ENCODE measurements at regions of chr6 and their contacts with region 1.

Region 1: DNA sequence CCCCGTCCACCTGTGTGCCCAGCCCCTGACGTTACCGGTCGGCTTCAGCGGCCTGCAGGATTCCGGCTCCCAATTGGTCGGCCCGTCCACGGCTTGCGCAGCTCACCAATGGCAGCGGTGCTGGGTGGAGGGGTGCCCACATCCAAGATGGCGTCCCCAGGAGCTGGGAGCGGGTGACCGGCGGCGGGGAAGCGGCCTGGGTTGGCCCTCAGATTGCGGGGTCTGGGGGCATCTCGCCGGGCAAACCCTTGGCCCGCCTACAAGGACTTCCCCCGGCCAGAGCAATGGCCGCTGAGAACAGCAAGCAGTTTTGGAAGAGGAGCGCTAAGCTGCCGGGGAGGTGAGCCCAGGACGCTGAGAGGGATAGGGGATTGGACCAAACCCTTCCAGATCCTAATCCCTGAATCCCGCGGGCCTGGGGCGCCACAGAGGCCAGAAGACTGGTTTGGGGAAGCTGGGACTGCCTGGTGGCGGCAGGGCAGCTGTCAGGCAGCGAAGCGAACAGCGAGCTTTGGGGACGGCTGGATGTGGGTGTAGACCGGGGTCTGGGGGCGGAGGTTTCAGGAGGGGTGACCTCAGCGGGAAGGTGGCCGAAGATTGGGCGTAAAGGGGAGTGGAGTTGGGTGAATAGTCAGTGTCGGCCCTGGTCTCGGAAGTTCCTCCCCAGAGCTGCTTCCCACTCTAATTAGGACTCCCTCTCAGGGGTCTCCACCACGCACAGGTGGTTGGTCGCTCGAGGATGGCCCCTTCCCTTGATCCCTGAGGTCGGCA is at the starts of genes TBC1D22B and TMEM217:
- DNase-seq: peak; percentile 99
- H3K4me3 Mint-ChIP-seq: peak within 1 kb of the TSS; percentile 88
- H3K27ac Mint-ChIP-seq: peak within 1 kb of the TSS; percentile 95
- H3K4me1 Mint-ChIP-seq: peaks cover 42% of the 10 kb centered on the region
- H3K27me3 Mint-ChIP-seq: no peaks in the 10 kb centered on the region
- total RNA-seq, gene TBC1D22B: 17.2 and 18.7 TPM in 2 replicates
- total RNA-seq, gene TMEM217: 4.1 and 6.1 TPM in 2 replicates

Region 2: GRCh38 chr6:36442671-36443470 is 814.9 kb before region 1 on chr6 and contains the starts of genes KCTD20 and PXT1:
- intact Hi-C with region 1: loop called (anchors 5 kb)
- DNase-seq: peak; percentile 96
- H3K4me3 Mint-ChIP-seq: peak within 1 kb of the TSS; percentile 96
- H3K27ac Mint-ChIP-seq: peak within 1 kb of the TSS; percentile 98
- H3K4me1 Mint-ChIP-seq: peaks cover 28% of the 10 kb centered on the region
- H3K27me3 Mint-ChIP-seq: no peaks in the 10 kb centered on the region
- total RNA-seq, gene KCTD20: 62.2 and 62.4 TPM in 2 replicates
- total RNA-seq, gene PXT1: 0.09 and 0.30 TPM in 2 replicates

Region 3: GRCh38 chr6:37222125-37222967 is 35.5 kb before region 1 on chr6:
- intact Hi-C with region 1: loop called (anchors 2 kb)
- DNase-seq: peak; percentile 94
- H3K4me3 Mint-ChIP-seq: peak overlapping the region; percentile 84
- H3K27ac Mint-ChIP-seq: peak overlapping the region; percentile 69
- H3K4me1 Mint-ChIP-seq: peaks cover 34% of the 10 kb centered on the region
- H3K27me3 Mint-ChIP-seq: no peaks in the 10 kb centered on the region

Region 4: DNA sequence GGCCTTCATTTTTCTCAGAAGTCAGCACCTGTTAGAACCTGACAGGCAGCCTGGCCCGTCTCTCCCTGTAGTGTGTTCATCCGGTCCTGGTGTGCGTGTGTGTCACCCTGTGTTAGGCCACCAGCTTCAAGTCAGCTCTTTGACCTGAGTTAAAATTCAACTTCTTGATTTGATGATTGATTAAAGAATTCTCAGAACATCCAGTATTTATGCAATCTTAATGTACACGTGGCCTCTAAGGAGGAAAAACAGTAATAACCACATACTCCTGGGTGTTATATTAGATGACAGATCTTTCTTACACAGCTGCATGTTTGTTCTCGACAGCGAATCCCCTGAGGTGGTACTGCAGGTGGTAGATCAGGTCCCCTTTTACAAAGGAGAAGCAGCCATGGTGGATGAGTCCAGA is 19.2 kb after region 1 on chr6:
- intact Hi-C with region 1: loop called (anchors 2 kb)
- DNase-seq: peak; percentile 65
- H3K4me3 Mint-ChIP-seq: peak overlapping the region; percentile 20
- H3K27ac Mint-ChIP-seq: peak overlapping the region; percentile 68
- H3K4me1 Mint-ChIP-seq: peaks cover 83% of the 10 kb centered on the region
- H3K27me3 Mint-ChIP-seq: no peaks in the 10 kb centered on the region

Region 5: GRCh38 chr6:37516076-37516919 is 258.5 kb after region 1 on chr6:
- intact Hi-C with region 1: loop called (anchors 10 kb)
- DNase-seq: peak; percentile 94
- H3K4me3 Mint-ChIP-seq: peak overlapping the region; percentile 76
- H3K27ac Mint-ChIP-seq: peak overlapping the region; percentile 97
- H3K4me1 Mint-ChIP-seq: peaks cover 58% of the 10 kb centered on the region
- H3K27me3 Mint-ChIP-seq: no peaks in the 10 kb centered on the region

Measured in activated CD4-positive, alpha-beta T cell treated with anti-CD3 and anti-CD28 coated beads, Interleukin-2, amount 10 ng/mL, durations not matched to agents 24 days and 14 days (primary cell).